Ovary (tissue), 10 donors: ENCODE measurements at regions of chr7 and their contacts with region 1.

Region 1: GRCh38 chr7:120272261-120272660 is 714 bp upstream of the KCND2 start:
- DNase-seq: peak in 4 of 5 donors; percentile 16 to 45 (median 26)
- H3K4me3 ChIP-seq: peak overlapping the region; percentile 52
- H3K27ac ChIP-seq: peak overlapping the region in 1 of 2 donors; percentile 5
- H3K4me1 ChIP-seq: no peaks in the 10 kb centered on the region
- H3K27me3 ChIP-seq: no peaks in the 10 kb centered on the region
- CTCF ChIP-seq: peak in 2 of 3 donors; percentile 57 to 67
- EP300 ChIP-seq: no peak
- POLR2A ChIP-seq: no peak

Region 2: GRCh38 chr7:119935418-119936025 is 336.7 kb before region 1 on chr7:
- intact Hi-C with region 1: loop called (anchors 5 to 10 kb)
- DNase-seq: no peak
- H3K4me3 ChIP-seq: no peak overlapping the region
- H3K27ac ChIP-seq: no peak overlapping the region
- H3K4me1 ChIP-seq: no peaks in the 10 kb centered on the region
- H3K27me3 ChIP-seq: peaks cover 2% of the 10 kb centered on the region
- CTCF ChIP-seq: peak in 1 of 3 donors; percentile 38
- EP300 ChIP-seq: no peak
- POLR2A ChIP-seq: no peak

Region 3: DNA sequence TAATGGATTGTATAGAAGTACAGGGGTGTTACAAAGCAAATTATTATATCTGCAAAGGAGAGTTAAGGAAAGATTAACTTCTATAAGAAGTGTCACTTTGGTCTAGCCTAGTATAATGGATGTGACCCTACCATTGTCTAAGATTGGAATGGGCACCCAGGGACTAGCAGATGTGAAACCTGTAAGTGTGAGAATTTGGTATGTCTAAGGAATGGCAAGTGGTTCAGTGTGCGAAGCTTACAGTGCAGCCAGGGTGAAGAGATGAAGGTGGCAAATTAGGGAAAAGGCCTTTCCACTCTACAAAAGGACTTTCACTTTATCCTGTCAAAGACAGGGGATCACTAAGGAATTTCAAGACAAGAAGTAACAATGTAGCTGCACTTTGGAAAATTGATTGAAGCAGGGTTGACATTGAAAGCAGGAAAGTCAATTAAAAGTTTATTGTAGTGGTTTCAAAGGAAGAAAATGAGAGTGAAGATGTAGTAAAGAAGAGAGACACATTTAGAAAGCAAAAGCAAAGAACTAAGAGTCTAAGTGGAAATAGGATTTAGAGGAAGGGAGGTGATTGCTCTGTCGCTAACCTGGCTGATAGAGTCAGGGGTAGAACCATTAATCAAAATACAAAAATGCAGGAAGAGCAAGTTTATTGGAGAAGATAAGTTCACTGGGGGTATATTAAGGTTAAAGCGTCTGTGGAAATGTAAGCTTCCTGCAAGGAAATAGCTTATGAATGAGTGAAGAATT is 48.1 kb after region 1 on chr7:
- intact Hi-C with region 1: no loop called
- DNase-seq: no peak
- H3K4me3 ChIP-seq: no peak overlapping the region
- H3K27ac ChIP-seq: no peak overlapping the region
- H3K4me1 ChIP-seq: no peaks in the 10 kb centered on the region
- H3K27me3 ChIP-seq: no peaks in the 10 kb centered on the region
- CTCF ChIP-seq: no peak
- EP300 ChIP-seq: no peak
- POLR2A ChIP-seq: no peak

Region 4: GRCh38 chr7:120654241-120654640 is 382.0 kb after region 1 on chr7:
- intact Hi-C with region 1: no loop called
- DNase-seq: no peak
- H3K4me3 ChIP-seq: no peak overlapping the region
- H3K27ac ChIP-seq: no peak overlapping the region
- H3K4me1 ChIP-seq: no peaks in the 10 kb centered on the region
- H3K27me3 ChIP-seq: no peaks in the 10 kb centered on the region
- CTCF ChIP-seq: no peak
- EP300 ChIP-seq: no peak
- POLR2A ChIP-seq: no peak